ENCODE measurements at regions of chr14 and their contacts with region 1.

Region 1: GRCh38 chr14:88044851-88045339 is 40.0 kb downstream of the GPR65 start:
- DNase-seq: peak; percentile 48
- ATAC-seq: peak; percentile 41
- H3K4me3 ChIP-seq: peak overlapping the region in 1 of 3 experiments; percentile 23; a peak in 1 of 6 replicates
- H3K27ac ChIP-seq: peak overlapping the region; percentile 89
- H3K4me1 ChIP-seq: peaks cover 57% of the 10 kb centered on the region
- H3K27me3 ChIP-seq: no peaks in the 10 kb centered on the region
- CTCF ChIP-seq: no peak
- EP300 ChIP-seq: peak in 1 of 2 experiments; percentile 76; a peak in 2 of 4 replicates
- POLR2A ChIP-seq: no peak
- RAD21 ChIP-seq: no peak

Region 2: DNA sequence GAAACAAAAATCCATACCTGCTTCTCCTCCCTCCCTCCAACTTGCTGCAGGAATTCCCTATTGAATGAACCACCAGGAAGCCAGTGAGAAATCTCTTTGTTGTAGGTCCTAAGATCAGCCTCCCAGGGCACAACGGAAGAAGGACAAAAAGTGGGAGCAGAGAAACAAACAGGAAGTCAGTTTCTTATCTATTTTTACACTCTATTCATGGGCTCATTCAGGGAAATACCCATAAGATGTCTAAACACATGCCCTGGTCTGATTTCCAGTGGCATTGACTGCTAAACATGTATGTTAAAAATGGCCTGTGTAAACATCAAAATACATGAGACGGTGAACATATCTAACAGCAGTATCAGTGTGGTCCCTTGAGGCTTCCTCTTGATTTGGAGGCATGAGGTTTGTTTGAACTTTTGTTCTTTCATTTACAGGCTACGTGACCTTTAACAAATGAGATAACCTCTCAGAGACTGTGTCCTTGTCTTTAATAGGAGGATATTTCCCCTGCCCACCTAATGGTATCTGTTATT is 21.2 kb before region 1 on chr14:
- CTCF ChIA-PET with region 1: no interaction called
- POLR2A ChIA-PET with region 1: interaction called, 3 read pairs
- in situ Hi-C with region 1: no loop called
- intact Hi-C with region 1: loop called (anchors 1 kb)
- DNase-seq: peak; percentile 78
- ATAC-seq: peak; percentile 86
- H3K4me3 ChIP-seq: peak overlapping the region; percentile 8 to 46 (median 33); a peak in 5 of 6 replicates
- H3K27ac ChIP-seq: peak overlapping the region; percentile 78
- H3K4me1 ChIP-seq: peaks cover 81% of the 10 kb centered on the region
- H3K27me3 ChIP-seq: no peaks in the 10 kb centered on the region
- CTCF ChIP-seq: no peak
- EP300 ChIP-seq: peak in 1 of 2 experiments; percentile 66; a peak in 2 of 4 replicates
- POLR2A ChIP-seq: no peak
- RAD21 ChIP-seq: no peak